ENCODE measurements at regions of chr1 and their contacts with region 1.

Region 1: GRCh38 chr1:97920832-97921571 is at the start of gene DPYD:
- DNase-seq: peak; percentile 77 to 86 (median 81)
- H3K4me3 ChIP-seq: peak within 1 kb of the TSS; percentile 96
- H3K4me3 Mint-ChIP-seq: peak within 1 kb of the TSS; percentile 95 to 100 (median 98)
- H3K27ac ChIP-seq: peak within 1 kb of the TSS; percentile 80
- H3K27ac Mint-ChIP-seq: peak within 1 kb of the TSS; percentile 67 to 97 (median 95)
- H3K4me1 ChIP-seq: peaks cover 29% of the 10 kb centered on the region
- H3K4me1 Mint-ChIP-seq: peaks cover 47 to 58% (median 58%) of the 10 kb centered on the region in 3 donors
- H3K27me3 ChIP-seq: no peaks in the 10 kb centered on the region
- H3K27me3 Mint-ChIP-seq: no peaks in the 10 kb centered on the region
- total RNA-seq, gene DPYD: 9.6 to 10.3 TPM

Region 2: DNA sequence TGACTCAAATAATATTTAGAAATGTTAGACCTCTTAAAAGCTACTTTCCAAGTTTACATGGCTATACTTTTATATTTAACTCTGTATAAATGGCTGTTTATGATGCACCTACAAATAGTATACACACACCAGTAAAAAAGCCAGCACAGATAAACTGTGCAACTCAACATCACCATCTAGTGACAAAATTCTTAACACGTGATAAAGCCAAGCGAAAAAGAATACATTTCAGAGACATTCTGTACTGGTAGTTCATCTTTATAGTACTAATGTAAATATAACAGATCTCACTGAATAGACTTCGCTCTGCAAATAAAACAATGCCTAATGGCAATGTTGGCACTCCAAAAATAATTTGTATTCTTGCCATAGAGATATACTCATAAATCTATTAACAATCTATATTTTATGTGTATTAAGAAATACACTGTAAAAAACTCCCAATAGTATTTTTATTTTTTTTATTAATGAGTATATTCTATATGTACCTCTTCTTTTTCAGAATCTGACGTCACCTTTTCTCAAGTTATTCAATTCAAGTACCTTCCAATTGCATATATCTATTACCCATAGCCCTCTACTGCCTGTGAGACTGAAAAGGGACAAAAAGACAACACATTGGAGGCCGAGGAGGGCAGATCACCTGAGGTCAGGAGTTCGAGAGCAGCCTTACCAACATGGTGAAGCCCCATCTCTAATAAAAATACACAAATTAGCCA is 100.4 kb before region 1 on chr1:
- CTCF ChIA-PET with region 1: no interaction called
- POLR2A ChIA-PET with region 1: interaction called, 12 read pairs
- DNase-seq: no peak
- H3K4me3 ChIP-seq: no peak overlapping the region
- H3K4me3 Mint-ChIP-seq: no peak overlapping the region
- H3K27ac ChIP-seq: no peak overlapping the region
- H3K27ac Mint-ChIP-seq: no peak overlapping the region
- H3K4me1 ChIP-seq: no peaks in the 10 kb centered on the region
- H3K4me1 Mint-ChIP-seq: peaks cover 0 to 4% (median 3%) of the 10 kb centered on the region in 3 donors
- H3K27me3 ChIP-seq: no peaks in the 10 kb centered on the region
- H3K27me3 Mint-ChIP-seq: no peaks in the 10 kb centered on the region

Region 3: GRCh38 chr1:98030483-98030882 is 109.5 kb after region 1 on chr1:
- CTCF ChIA-PET with region 1: no interaction called
- POLR2A ChIA-PET with region 1: no interaction called
- DNase-seq: no peak
- H3K4me3 ChIP-seq: no peak overlapping the region
- H3K4me3 Mint-ChIP-seq: no peak overlapping the region
- H3K27ac ChIP-seq: no peak overlapping the region
- H3K27ac Mint-ChIP-seq: no peak overlapping the region
- H3K4me1 ChIP-seq: no peaks in the 10 kb centered on the region
- H3K4me1 Mint-ChIP-seq: no peaks in the 10 kb centered on the region
- H3K27me3 ChIP-seq: no peaks in the 10 kb centered on the region
- H3K27me3 Mint-ChIP-seq: peaks cover 9 to 32% of the 10 kb centered on the region in 2 donors

Measured in CD8-positive, alpha-beta memory T cell (primary cell).